ENCODE measurements at regions of chr3 and their contacts with region 1.

Region 1: DNA sequence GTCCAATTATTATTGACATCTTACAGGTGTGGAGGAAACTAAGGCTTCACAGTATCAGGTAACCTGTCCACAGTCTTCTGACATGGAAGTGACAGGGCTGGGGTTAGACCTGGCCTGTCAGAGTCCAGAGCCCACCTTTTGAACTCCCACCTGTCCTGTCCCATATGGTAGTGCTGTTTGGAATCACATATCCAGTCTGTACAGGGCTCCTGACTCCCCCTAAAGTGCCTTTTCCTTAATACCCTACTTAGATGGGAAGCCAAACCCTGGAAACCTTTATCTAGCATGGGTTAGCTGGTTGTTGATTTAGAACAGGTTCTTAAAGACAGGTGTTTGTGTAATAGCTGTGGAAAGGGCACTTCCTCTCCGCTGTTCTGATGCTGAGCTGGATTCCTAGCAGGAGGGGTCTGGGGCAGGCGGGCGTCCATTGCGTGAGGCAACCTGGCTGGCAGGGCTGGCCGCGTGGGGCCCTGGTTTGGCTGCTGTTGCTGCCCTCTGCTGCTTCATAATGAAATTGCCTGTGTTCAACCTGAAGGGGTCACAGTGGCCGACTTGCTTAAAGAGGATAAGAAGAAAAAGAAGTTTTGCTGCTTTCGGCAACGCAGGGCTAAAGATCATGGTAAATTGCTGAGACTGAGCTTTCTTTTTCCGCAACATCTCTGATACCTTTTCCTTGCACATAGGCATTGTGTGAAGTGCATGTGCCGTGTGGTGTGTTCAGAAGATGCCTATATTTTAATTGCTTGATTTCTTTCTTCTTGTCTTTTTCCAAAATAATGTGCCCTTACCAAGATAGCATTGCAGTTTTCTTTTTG is 136.2 kb downstream of the CHDH start:
- DNase-seq: peak; percentile 58 to 64 (median 60)
- ATAC-seq: peak; percentile 95
- H3K4me3 ChIP-seq: no peak overlapping the region
- H3K27ac ChIP-seq: no peak overlapping the region
- H3K4me1 ChIP-seq: no peaks in the 10 kb centered on the region
- H3K27me3 ChIP-seq: no peaks in the 10 kb centered on the region; a peak in 2 of 5 replicates
- CTCF ChIP-seq: peak; percentile 67 to 77 (median 73)
- EP300 ChIP-seq: no peak
- POLR2A ChIP-seq: no peak
- RAD21 ChIP-seq: peak; percentile 66 to 77

Region 2: GRCh38 chr3:53219895-53220483 is 490.1 kb before region 1 on chr3:
- CTCF ChIA-PET with region 1: no interaction called
- POLR2A ChIA-PET with region 1: no interaction called
- in situ Hi-C with region 1: no loop called
- intact Hi-C with region 1: loop called (anchors 1 kb)
- DNase-seq: peak; percentile 73 to 85 (median 80)
- ATAC-seq: peak; percentile 95
- H3K4me3 ChIP-seq: no peak overlapping the region
- H3K27ac ChIP-seq: no peak overlapping the region
- H3K4me1 ChIP-seq: 0 out of 5 replicates have a peak, but pooled peaks cover 0 to 3% of the 10 kb centered on the region in 2 experiments
- H3K27me3 ChIP-seq: no peaks in the 10 kb centered on the region
- CTCF ChIP-seq: peak; percentile 89 to 95 (median 90)
- EP300 ChIP-seq: no peak
- POLR2A ChIP-seq: no peak
- RAD21 ChIP-seq: peak; percentile 67 to 80

Region 3: DNA sequence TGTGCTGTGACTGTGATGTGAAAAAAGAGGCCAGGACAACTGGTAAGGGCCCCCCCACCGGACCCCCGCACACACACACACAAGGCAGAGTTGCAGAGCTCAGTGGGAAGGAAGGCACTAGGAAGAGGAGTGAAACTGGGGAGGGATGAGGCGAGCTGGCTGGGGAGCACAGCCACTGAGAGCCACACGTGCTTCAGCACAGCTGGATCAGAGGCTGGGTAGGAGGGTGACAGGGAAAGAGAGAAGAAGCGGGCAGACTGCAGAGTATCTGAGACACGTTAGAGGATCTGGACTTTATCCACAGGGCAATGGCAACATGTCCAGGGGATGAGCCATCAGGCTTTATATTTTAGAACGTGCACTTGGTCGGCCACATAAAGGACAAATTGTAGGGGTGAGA is 416.2 kb before region 1 on chr3:
- CTCF ChIA-PET with region 1: interaction called, 3 read pairs
- POLR2A ChIA-PET with region 1: no interaction called
- in situ Hi-C with region 1: no loop called
- intact Hi-C with region 1: loop called (anchors 10 kb)
- DNase-seq: no peak
- ATAC-seq: no peak
- H3K4me3 ChIP-seq: no peak overlapping the region
- H3K27ac ChIP-seq: no peak overlapping the region
- H3K4me1 ChIP-seq: no peaks in the 10 kb centered on the region
- H3K27me3 ChIP-seq: no peaks in the 10 kb centered on the region
- CTCF ChIP-seq: no peak
- EP300 ChIP-seq: no peak
- POLR2A ChIP-seq: no peak
- RAD21 ChIP-seq: no peak

Region 4: DNA sequence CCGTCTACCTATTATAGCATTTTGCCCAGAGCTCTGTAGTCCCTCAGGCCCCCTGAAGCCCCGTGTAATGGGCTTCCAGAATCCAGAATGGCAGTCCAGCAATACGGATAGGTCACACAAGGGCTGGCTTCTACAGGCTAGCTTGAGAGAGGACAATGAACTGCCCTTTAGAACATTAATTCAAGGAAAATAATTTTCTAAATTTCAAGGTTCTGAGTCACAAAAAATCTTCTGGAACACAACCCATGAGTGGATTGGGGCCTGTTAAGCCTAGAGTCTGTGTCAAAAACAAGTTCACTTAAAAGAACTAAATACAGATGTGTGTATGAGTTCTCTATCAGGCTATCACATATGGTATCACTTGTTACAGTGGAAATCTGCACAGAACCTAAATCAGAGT is 391.5 kb before region 1 on chr3:
- CTCF ChIA-PET with region 1: no interaction called
- POLR2A ChIA-PET with region 1: no interaction called
- in situ Hi-C with region 1: loop called (anchors 10 kb)
- intact Hi-C with region 1: no loop called
- DNase-seq: no peak
- ATAC-seq: no peak
- H3K4me3 ChIP-seq: no peak overlapping the region
- H3K27ac ChIP-seq: no peak overlapping the region
- H3K4me1 ChIP-seq: no peaks in the 10 kb centered on the region
- H3K27me3 ChIP-seq: no peaks in the 10 kb centered on the region
- CTCF ChIP-seq: no peak
- EP300 ChIP-seq: no peak
- POLR2A ChIP-seq: no peak
- RAD21 ChIP-seq: no peak

Region 5: DNA sequence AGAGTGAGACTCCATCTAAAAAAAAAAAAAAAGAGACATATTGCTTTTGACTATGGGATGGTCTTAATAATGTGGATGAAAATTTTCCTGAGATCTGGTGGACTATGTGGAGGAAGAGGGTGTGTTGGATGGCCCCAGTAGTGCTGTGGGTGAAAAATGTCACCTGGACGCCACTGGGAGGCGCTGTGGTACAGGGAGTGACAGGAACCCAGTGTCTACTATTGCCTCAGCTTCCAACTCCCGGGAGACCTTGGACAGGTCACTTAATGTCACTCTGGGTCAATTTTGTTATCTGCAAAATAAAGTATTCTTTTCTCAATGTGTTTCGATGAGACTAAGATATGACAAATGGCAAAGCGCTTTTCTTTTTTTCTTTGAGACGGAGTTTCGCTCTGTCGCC is 335.0 kb before region 1 on chr3:
- CTCF ChIA-PET with region 1: no interaction called
- POLR2A ChIA-PET with region 1: interaction called, 3 read pairs
- in situ Hi-C with region 1: loop called (anchors 10 kb)
- intact Hi-C with region 1: loop called (anchors 1 kb)
- DNase-seq: peak; percentile 56 to 77 (median 68)
- ATAC-seq: peak; percentile 98
- H3K4me3 ChIP-seq: no peak overlapping the region
- H3K27ac ChIP-seq: no peak overlapping the region
- H3K4me1 ChIP-seq: peaks cover 0 to 3% of the 10 kb centered on the region in 2 experiments; a peak in 2 of 5 replicates
- H3K27me3 ChIP-seq: no peaks in the 10 kb centered on the region; a peak in 2 of 5 replicates
- CTCF ChIP-seq: peak; percentile 74 to 82 (median 77)
- EP300 ChIP-seq: no peak
- POLR2A ChIP-seq: no peak
- RAD21 ChIP-seq: peak; percentile 51 to 79

Region 6: GRCh38 chr3:53506110-53506762 is 203.8 kb before region 1 on chr3:
- CTCF ChIA-PET with region 1: no interaction called
- POLR2A ChIA-PET with region 1: no interaction called
- in situ Hi-C with region 1: no loop called
- intact Hi-C with region 1: no loop called
- DNase-seq: no peak
- ATAC-seq: no peak
- H3K4me3 ChIP-seq: no peak overlapping the region
- H3K27ac ChIP-seq: no peak overlapping the region
- H3K4me1 ChIP-seq: no peaks in the 10 kb centered on the region
- H3K27me3 ChIP-seq: peaks cover 6 to 30% of the 10 kb centered on the region in 2 experiments; a peak in 4 of 5 replicates
- CTCF ChIP-seq: no peak
- EP300 ChIP-seq: no peak
- POLR2A ChIP-seq: no peak
- RAD21 ChIP-seq: no peak

Region 7: DNA sequence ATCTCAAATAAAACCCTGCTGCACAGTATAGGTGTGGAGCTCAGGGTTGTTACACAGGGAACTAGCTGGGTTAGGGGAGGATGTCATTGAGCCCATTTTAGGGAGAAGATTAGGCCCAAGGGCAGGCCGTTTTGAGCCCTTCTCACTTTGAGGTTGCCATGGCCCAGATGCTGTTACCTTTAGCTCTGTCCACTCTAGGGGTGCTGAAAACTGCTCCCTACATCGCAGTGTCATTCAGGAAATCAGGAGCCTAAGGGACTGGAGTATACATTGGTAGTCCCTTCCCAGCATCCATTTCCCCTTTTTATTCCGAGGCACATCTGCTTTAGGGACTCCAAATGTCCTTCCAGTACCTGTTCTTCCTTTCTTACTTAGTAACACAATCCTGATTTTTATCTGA is 260.6 kb after region 1 on chr3:
- CTCF ChIA-PET with region 1: no interaction called
- POLR2A ChIA-PET with region 1: no interaction called
- in situ Hi-C with region 1: no loop called
- intact Hi-C with region 1: no loop called
- DNase-seq: no peak
- ATAC-seq: no peak
- H3K4me3 ChIP-seq: no peak overlapping the region
- H3K27ac ChIP-seq: no peak overlapping the region
- H3K4me1 ChIP-seq: no peaks in the 10 kb centered on the region
- H3K27me3 ChIP-seq: no peaks in the 10 kb centered on the region
- CTCF ChIP-seq: no peak
- EP300 ChIP-seq: no peak
- POLR2A ChIP-seq: no peak
- RAD21 ChIP-seq: no peak

Region 8: DNA sequence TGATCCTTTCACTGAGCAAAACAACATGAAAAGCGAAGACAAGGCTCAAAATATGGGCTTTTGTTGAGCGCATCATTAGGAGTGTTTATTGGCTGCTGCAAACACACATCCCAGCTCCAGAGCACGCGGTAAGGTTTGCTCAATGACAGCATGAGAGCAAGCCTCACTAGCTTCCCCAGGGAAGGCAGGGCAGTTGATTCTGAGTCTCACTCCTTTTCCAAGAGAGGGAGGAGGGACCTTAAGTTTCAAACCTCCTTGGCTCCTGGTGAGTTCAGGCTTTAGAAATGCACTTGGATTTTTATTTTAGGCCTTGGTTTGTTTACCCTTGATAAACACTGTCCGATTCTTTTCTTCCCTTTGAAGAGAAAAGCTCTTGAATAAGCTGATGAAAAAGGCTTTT is 343.1 kb after region 1 on chr3:
- CTCF ChIA-PET with region 1: no interaction called
- POLR2A ChIA-PET with region 1: no interaction called
- in situ Hi-C with region 1: no loop called
- intact Hi-C with region 1: no loop called
- DNase-seq: no peak
- ATAC-seq: no peak
- H3K4me3 ChIP-seq: no peak overlapping the region
- H3K27ac ChIP-seq: no peak overlapping the region
- H3K4me1 ChIP-seq: no peaks in the 10 kb centered on the region
- H3K27me3 ChIP-seq: no peaks in the 10 kb centered on the region
- CTCF ChIP-seq: no peak
- EP300 ChIP-seq: no peak
- POLR2A ChIP-seq: no peak
- RAD21 ChIP-seq: no peak

Region 9: GRCh38 chr3:54421943-54422342 is 711.9 kb after region 1 on chr3:
- CTCF ChIA-PET with region 1: no interaction called
- POLR2A ChIA-PET with region 1: no interaction called
- in situ Hi-C with region 1: no loop called
- intact Hi-C with region 1: no loop called
- DNase-seq: no peak
- ATAC-seq: no peak
- H3K4me3 ChIP-seq: no peak overlapping the region
- H3K27ac ChIP-seq: no peak overlapping the region
- H3K4me1 ChIP-seq: no peaks in the 10 kb centered on the region
- H3K27me3 ChIP-seq: no peaks in the 10 kb centered on the region
- CTCF ChIP-seq: no peak
- EP300 ChIP-seq: no peak
- POLR2A ChIP-seq: no peak
- RAD21 ChIP-seq: no peak